Calu3 (cell line): ENCODE measurements at regions of chr1 and their contacts with region 1.

Region 1: DNA sequence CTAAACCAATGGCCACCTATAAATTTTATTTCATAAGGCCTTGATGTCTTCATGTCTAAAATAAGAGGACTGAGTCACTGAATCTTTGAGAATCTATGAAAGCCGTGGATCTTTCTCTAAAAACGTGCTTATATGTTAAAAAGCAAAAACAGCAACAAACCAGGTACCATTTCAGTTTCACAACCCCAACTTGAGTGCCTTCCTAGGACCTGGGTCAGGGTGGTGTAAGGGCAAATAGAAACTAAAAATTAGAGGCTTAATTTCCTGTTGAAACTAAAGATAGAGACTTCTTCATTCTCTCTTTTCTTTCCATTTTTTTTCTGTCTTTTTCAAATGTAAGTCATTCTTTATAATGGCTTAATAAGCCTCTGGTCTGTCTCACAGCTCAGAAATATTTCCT is 27.2 kb upstream of the PGBD5 start:
- DNase-seq: no peak
- H3K4me3 Mint-ChIP-seq: no peak overlapping the region
- H3K27ac Mint-ChIP-seq: no peak overlapping the region
- H3K4me1 Mint-ChIP-seq: peaks cover 1% of the 10 kb centered on the region
- H3K27me3 Mint-ChIP-seq: no peaks in the 10 kb centered on the region
- CTCF ChIP-seq: no peak

Region 2: DNA sequence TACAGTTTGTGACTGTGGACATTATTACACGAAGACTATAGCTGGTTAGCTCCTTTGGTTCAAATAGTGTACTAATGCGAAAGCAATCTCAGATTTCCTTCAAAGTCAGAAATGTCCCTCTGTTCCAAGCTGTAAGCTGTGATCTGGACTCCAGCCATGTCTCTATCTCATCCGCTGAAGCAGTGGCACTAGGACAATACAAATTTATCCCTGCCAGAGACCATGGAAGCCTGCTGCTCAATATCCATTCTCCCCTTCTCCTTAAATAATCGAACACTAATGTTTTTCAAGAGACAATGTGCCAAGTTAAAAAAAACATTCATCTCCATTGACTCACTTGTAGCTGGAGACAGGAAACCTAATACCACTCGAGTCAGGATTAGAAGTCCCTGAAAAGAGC is 11.2 kb after region 1 on chr1:
- CTCF ChIA-PET with region 1: no interaction called
- intact Hi-C with region 1: loop called (anchors 1 kb)
- DNase-seq: no peak
- H3K4me3 Mint-ChIP-seq: no peak overlapping the region
- H3K27ac Mint-ChIP-seq: no peak overlapping the region
- H3K4me1 Mint-ChIP-seq: peaks cover 11% of the 10 kb centered on the region
- H3K27me3 Mint-ChIP-seq: no peaks in the 10 kb centered on the region
- CTCF ChIP-seq: no peak

Region 3: GRCh38 chr1:230487773-230488428 is 34.5 kb after region 1 on chr1:
- CTCF ChIA-PET with region 1: no interaction called
- intact Hi-C with region 1: no loop called
- DNase-seq: no peak
- H3K4me3 Mint-ChIP-seq: no peak overlapping the region
- H3K27ac Mint-ChIP-seq: no peak overlapping the region
- H3K4me1 Mint-ChIP-seq: no peaks in the 10 kb centered on the region
- H3K27me3 Mint-ChIP-seq: no peaks in the 10 kb centered on the region
- CTCF ChIP-seq: no peak